WTC11 (cell line): ENCODE measurements at regions of chr9 and their contacts with region 1.

Region 1: DNA sequence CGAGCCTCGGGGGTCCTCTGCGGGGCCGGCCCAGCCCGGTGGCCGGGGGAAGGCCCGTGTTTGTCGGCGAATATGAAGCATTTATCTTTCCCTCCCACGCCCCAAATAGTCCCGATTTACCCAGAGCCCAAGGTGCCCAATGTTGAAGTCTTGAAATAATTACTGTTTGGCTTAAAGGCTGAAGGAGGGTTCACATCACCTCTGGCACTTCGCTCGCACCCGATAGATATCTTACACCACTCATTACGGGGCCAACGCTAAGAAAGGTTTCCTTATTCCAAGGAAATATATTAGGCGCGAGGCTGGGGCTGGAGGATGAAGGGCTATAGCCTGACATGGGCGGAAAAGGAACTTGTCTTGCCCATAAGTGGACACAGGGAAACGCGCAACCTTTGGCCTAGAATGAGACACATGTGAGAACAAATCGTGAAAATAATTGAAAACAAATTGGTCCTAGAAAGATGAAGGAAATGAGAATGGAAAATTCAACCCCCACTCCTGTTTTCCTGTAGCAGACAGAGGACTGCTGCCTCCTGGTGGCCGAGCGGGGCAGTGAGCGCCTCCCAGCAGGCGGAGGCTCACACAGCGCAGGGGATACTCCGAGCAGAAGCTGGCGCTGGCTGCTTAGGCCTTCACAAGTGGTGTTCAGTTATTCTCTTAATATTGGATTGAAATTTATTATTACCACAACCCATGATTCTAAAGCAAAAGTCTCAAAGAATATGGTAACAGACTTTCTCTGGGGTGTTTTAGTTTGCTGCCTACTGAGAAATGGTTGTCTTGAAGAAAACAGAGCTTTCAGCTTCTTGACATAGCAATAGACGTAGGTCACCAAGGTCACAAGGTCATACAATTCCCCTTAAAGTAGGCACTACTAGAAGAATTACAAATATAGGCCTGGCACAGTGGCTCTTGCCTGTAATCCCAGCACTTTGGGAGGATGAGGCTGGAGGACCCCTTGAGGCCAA is 7.9 kb downstream of the CCL21 start:
- DNase-seq: peak; percentile 88
- ATAC-seq: peak; percentile 61
- H3K4me3 Mint-ChIP-seq: peak overlapping the region; percentile 63
- H3K27ac Mint-ChIP-seq: no peak overlapping the region
- H3K4me1 Mint-ChIP-seq: peaks cover 7% of the 10 kb centered on the region
- H3K27me3 Mint-ChIP-seq: peaks cover 43% of the 10 kb centered on the region
- CTCF ChIP-seq: peak; percentile 83

Region 2: GRCh38 chr9:34646211-34647083 is 55.6 kb before region 1 on chr9 and contains the start of gene GALT:
- CTCF ChIA-PET with region 1: interaction called, 19 read pairs
- POLR2A ChIA-PET with region 1: interaction called, 3 read pairs
- DNase-seq: peak; percentile 95
- ATAC-seq: peak; percentile 87
- H3K4me3 Mint-ChIP-seq: peak within 1 kb of the TSS; percentile 85
- H3K27ac Mint-ChIP-seq: peak within 1 kb of the TSS; percentile 76
- H3K4me1 Mint-ChIP-seq: peaks cover 34% of the 10 kb centered on the region
- H3K27me3 Mint-ChIP-seq: no peaks in the 10 kb centered on the region
- CTCF ChIP-seq: no peak
- total RNA-seq, gene GALT: 35.9 to 39.7 TPM (median 37.6 TPM) in 3 replicates

Region 3: DNA sequence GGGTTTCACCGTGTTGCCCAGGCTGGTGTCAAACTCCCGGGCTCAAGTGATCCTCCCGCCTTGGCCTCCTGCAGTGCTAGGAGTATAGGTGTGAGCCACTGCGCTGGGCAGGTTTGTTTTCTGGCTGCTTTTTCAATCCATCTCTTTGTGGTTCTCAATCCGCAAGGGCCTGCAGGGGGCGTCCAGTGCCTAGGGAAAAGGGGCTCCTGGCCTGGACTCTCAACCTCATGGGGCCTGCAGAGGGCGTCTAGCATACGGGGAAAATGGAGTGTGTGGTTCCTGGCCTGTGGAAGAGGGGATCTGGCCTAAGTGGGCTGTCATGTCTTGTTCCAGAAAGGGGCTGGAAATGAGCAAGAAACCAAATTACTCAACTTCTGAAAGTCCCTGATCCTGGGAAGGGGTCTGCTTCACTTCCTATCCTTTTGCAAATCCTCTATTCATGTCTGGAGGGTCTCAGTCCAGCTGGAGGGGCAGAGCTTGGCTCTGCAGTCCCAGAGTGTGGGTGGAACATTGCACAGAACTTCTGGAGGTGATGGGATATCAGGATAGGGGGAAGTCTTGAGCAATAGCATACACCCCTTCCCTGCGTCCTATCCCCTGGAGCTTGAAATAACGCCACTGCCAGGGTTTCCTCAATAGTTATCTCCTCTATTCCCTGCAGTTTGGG is 26.9 kb before region 1 on chr9:
- CTCF ChIA-PET with region 1: interaction called, 120 read pairs
- POLR2A ChIA-PET with region 1: interaction called, 4 read pairs
- DNase-seq: peak; percentile 92
- ATAC-seq: peak; percentile 99
- H3K4me3 Mint-ChIP-seq: no peak overlapping the region
- H3K27ac Mint-ChIP-seq: no peak overlapping the region
- H3K4me1 Mint-ChIP-seq: peaks cover 5% of the 10 kb centered on the region
- H3K27me3 Mint-ChIP-seq: peaks cover 6% of the 10 kb centered on the region; the same call in 1 of the 2 replicates
- CTCF ChIP-seq: peak; percentile 52

Region 4: DNA sequence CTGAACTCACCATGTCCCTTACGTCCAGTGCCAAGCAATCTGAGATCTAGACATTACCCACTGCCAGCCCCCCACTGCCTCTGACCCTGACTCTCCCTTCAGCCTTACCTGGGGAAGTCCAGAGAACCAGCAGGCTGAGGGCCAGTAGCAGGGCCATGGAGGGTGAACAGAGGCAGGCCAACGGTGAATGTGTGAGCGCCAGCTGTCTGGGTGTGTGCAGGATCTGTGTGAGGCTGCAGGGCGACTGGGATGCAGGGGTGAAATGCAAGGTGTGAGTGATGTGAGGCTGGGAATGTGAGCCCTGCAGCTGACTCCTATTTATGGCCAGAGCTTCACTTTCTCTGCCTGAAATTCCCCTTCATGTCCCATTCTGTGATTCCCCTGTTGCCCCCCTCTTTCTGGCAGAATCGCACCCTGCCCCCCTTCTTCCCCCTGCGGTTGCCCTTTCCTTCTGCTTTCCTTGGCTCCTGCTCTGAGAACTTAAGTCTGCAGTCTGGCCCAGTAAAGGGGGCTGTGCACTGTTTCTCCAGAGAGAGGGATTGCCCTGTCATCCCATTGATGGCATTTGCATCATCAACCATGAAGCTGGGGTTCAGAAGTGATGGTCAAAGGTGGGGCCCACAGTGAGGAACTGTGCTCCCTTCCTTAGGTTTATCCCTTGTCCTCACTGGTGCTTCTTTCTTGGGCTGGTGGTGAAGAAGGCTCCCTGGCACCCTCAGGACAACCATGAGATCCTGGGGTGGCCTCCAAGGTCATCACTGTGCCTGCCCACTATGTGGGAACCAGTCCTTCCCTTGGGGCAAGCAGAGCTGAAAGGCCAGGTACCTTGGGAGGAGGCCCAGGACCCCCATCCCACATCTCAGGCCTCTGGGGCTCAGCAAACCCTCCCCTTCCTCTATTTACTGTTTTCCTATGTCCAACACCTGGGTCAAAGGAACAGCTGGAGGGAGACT is 10.8 kb before region 1 on chr9 and contains the start of gene CCL19:
- CTCF ChIA-PET with region 1: interaction called, 60 read pairs
- POLR2A ChIA-PET with region 1: no interaction called
- DNase-seq: no peak
- ATAC-seq: no peak
- H3K4me3 Mint-ChIP-seq: no peak within 1 kb of the TSS
- H3K27ac Mint-ChIP-seq: no peak within 1 kb of the TSS
- H3K4me1 Mint-ChIP-seq: peaks cover 20% of the 10 kb centered on the region
- H3K27me3 Mint-ChIP-seq: peaks cover 3% of the 10 kb centered on the region
- CTCF ChIP-seq: no peak
- total RNA-seq, gene CCL19: not detected in 3 replicates

Region 5: GRCh38 chr9:34744295-34745221 is 42.5 kb after region 1 on chr9:
- CTCF ChIA-PET with region 1: interaction called, 14 read pairs
- POLR2A ChIA-PET with region 1: no interaction called
- DNase-seq: no peak
- ATAC-seq: no peak
- H3K4me3 Mint-ChIP-seq: no peak overlapping the region
- H3K27ac Mint-ChIP-seq: no peak overlapping the region
- H3K4me1 Mint-ChIP-seq: no peaks in the 10 kb centered on the region
- H3K27me3 Mint-ChIP-seq: peaks cover 5% of the 10 kb centered on the region
- CTCF ChIP-seq: no peak

Region 6: GRCh38 chr9:34796924-34797323 is 94.9 kb after region 1 on chr9:
- CTCF ChIA-PET with region 1: interaction called, 10 read pairs
- POLR2A ChIA-PET with region 1: no interaction called
- DNase-seq: peak; percentile 54
- ATAC-seq: peak; percentile 78
- H3K4me3 Mint-ChIP-seq: no peak overlapping the region; the same call in 1 of the 2 replicates
- H3K27ac Mint-ChIP-seq: no peak overlapping the region
- H3K4me1 Mint-ChIP-seq: peaks cover 14% of the 10 kb centered on the region
- H3K27me3 Mint-ChIP-seq: peaks cover 23% of the 10 kb centered on the region
- CTCF ChIP-seq: no peak

Region 7: DNA sequence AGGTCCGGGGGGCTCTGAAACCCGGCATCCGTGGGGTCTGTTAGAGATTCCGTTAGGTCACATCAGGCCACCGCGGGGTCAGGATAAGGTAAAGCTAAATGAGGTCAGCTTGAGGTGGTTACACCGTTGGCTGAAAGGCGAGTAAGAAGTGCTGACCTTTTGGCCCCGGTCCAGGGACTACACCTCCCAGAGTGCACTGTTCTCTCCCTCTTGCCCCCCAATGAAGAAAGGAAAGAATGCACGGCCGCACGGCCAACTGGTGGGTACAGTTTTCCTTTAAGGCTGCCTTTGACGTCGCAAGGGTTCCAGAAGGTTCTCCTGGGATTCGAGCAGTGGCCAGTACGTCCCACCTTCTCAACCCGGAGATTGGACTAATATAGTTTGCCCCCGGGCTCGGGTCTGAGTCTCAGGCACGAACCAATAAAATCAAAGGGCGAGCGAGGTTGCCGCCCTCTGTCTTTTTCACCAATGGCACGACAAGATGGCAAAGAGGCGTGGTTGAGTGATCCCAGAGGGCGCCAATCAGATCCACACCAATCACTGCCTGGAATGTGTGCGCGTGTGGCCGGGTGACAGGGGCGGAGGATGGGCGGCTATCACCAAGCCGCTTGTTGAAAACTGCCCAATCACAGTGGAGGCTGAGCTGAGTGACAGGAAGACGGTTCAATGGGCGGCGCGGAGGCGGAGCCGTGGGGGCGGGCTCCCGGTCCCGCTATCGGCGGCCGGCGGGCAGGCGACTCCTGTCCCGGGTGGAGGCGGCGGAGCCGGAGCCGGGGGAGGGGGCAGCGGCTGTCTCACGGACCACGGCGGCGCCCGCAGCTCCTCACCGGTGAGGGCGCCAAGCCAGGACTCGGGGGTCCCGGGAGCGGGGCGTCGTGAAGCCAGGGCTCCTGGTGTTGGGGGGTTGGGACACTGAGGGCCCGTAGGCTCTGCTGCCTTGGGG is 287.2 kb after region 1 on chr9 and contains the start of gene DNAJB5:
- CTCF ChIA-PET with region 1: interaction called, 12 read pairs
- POLR2A ChIA-PET with region 1: no interaction called
- DNase-seq: peak; percentile 98
- ATAC-seq: peak; percentile 85
- H3K4me3 Mint-ChIP-seq: peak within 1 kb of the TSS; percentile 82
- H3K27ac Mint-ChIP-seq: peak within 1 kb of the TSS; percentile 98
- H3K4me1 Mint-ChIP-seq: peaks cover 60% of the 10 kb centered on the region
- H3K27me3 Mint-ChIP-seq: peaks cover 4% of the 10 kb centered on the region
- CTCF ChIP-seq: no peak
- total RNA-seq, gene DNAJB5: 26.7 to 30.0 TPM (median 28.6 TPM) in 3 replicates